ENCODE measurements at regions of chr4 and their contacts with region 1.

Region 1: DNA sequence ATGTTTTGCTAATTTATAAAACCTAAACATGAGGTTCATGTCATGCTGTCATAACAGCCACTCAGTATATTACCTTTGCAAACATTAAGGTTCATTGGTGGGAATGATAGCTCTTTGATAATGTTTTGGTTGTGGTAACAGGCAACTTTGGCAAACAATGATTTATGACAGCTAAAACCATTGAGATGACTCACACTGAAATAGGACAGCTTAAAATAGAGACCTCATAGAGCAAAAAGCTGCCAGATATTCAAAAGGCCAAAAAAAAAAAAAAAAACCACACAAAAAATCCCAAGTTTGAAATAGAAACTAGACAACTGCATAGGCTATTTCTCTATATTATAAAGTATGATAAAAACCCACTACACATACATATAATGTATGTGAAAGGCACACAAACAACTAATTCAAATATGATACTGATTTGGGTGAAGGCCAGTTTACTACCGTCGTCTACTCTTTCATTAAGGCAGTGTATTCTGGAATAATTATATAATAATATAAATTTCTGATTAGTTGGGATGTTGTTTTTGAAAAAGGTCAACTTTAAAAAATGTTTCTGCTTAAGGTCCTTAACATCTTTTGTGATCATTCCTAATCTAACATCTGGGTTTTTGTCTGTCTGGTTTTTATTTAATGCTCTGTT is 646.0 kb upstream of the PITX2 start:
- DNase-seq: no peak
- H3K4me3 ChIP-seq: no peak overlapping the region
- H3K27ac ChIP-seq: no peak overlapping the region
- H3K4me1 ChIP-seq: peaks cover 0 to 4% (median 1%) of the 10 kb centered on the region in 4 experiments; a peak in 3 of 7 replicates
- H3K27me3 ChIP-seq: no peaks in the 10 kb centered on the region
- CTCF ChIP-seq: no peak
- EP300 ChIP-seq: no peak
- POLR2A ChIP-seq: no peak
- RAD21 ChIP-seq: no peak

Region 2: DNA sequence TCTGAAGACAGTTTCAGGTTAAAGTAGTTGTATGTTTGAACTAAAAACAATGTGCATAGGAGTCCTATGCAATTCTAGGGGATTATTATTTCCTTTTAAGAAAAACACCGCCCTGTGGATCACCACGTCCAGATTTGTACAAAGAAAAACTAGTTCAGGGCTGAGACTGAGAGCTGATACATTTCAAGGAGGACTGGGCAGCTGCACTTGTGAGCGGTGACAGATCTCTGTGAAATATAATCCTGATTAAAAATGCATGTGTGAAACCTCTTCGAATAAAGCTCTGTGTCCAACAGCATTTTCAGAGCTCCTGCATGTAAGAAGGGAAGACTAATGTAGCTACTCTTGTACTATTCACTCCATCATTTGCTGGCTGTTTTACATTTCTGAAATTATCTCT is 280.2 kb before region 1 on chr4:
- CTCF ChIA-PET with region 1: no interaction called
- POLR2A ChIA-PET with region 1: no interaction called
- DNase-seq: no peak
- H3K4me3 ChIP-seq: no peak overlapping the region
- H3K27ac ChIP-seq: no peak overlapping the region
- H3K4me1 ChIP-seq: no peaks in the 10 kb centered on the region
- H3K27me3 ChIP-seq: no peaks in the 10 kb centered on the region
- CTCF ChIP-seq: no peak
- EP300 ChIP-seq: no peak
- POLR2A ChIP-seq: no peak
- RAD21 ChIP-seq: no peak

Region 3: GRCh38 chr4:111283061-111283677 is 14.3 kb after region 1 on chr4:
- CTCF ChIA-PET with region 1: interaction called, 13 read pairs
- POLR2A ChIA-PET with region 1: no interaction called
- DNase-seq: peak; percentile 29 to 85
- H3K4me3 ChIP-seq: no peak overlapping the region
- H3K27ac ChIP-seq: no peak overlapping the region
- H3K4me1 ChIP-seq: no peaks in the 10 kb centered on the region
- H3K27me3 ChIP-seq: no peaks in the 10 kb centered on the region
- CTCF ChIP-seq: peak; percentile 15 to 82 (median 80)
- EP300 ChIP-seq: no peak
- POLR2A ChIP-seq: no peak
- RAD21 ChIP-seq: peak; percentile 73 to 81

Region 4: DNA sequence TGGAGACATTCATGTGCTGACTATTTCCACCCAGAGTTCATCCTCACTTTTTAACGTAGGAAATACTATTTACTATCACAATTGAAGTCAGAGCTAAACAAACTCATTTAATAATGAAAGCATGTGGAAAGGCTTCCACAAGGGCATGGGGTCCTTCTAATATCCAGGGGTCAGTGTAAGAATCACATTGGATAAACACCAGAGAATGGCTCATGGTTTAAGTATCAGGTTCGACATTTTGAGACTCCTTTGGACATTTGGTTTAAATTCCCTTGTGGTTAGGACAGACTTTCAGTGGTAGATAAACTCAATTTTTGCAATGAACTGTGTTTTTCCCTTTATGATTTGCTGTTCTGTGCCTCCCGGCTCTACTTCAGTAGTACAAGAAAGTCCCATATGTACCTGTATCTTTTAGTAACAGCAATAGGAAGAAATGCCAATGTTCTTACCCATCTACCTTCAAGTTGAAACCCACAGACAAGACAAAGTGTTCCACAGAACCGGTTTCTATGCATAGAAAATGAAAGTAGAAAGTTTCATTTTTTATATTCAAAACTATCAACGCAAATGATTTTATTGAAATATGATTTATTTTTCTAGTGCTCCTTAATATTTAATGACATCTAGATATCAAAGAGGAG is 287.4 kb after region 1 on chr4:
- CTCF ChIA-PET with region 1: no interaction called
- POLR2A ChIA-PET with region 1: no interaction called
- DNase-seq: no peak
- H3K4me3 ChIP-seq: no peak overlapping the region
- H3K27ac ChIP-seq: no peak overlapping the region
- H3K4me1 ChIP-seq: no peaks in the 10 kb centered on the region
- H3K27me3 ChIP-seq: no peaks in the 10 kb centered on the region
- CTCF ChIP-seq: no peak
- EP300 ChIP-seq: no peak
- POLR2A ChIP-seq: no peak
- RAD21 ChIP-seq: no peak

Measured in H1 (cell line).